Activated CD4-positive, alpha-beta memory T cell treated with anti-CD3 and anti-CD28 coated beads for 36 hours (primary cell): ENCODE measurements at regions of chr19 and their contacts with region 1.

Region 1: DNA sequence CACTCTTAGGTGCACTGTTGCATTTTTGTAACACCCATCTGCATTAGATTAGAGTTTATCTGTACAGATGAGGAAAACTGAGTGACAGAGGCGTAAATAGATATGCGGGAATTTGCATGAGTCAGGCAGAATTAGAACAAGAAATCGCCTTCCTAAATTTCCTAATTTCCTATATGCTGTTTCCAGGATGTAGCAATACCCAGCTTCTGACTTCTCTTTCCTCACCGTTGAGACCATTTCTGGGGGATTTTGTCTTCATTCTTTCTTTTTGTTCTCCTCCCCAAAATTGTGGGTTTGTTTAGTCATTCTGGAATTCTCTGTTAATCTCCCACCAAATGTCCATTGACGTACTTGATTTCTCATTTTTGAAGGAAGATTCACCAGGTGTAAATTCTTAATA is 10.6 kb upstream of the ZNF792 start:
- DNase-seq: no peak
- H3K4me3 Mint-ChIP-seq: no peak overlapping the region
- H3K27ac Mint-ChIP-seq: no peak overlapping the region
- H3K4me1 Mint-ChIP-seq: peaks cover 27% of the 10 kb centered on the region
- H3K27me3 Mint-ChIP-seq: no peaks in the 10 kb centered on the region

Region 2: GRCh38 chr19:34990578-34991192 is 16.0 kb after region 1 on chr19:
- CTCF ChIA-PET with region 1: interaction called, 10 read pairs
- POLR2A ChIA-PET with region 1: interaction called, 3 read pairs
- intact Hi-C with region 1: loop called (anchors 2 kb)
- DNase-seq: peak; percentile 85
- H3K4me3 Mint-ChIP-seq: peak overlapping the region; percentile 33
- H3K27ac Mint-ChIP-seq: peak overlapping the region; percentile 96
- H3K4me1 Mint-ChIP-seq: peaks cover 59% of the 10 kb centered on the region
- H3K27me3 Mint-ChIP-seq: no peaks in the 10 kb centered on the region

Region 3: DNA sequence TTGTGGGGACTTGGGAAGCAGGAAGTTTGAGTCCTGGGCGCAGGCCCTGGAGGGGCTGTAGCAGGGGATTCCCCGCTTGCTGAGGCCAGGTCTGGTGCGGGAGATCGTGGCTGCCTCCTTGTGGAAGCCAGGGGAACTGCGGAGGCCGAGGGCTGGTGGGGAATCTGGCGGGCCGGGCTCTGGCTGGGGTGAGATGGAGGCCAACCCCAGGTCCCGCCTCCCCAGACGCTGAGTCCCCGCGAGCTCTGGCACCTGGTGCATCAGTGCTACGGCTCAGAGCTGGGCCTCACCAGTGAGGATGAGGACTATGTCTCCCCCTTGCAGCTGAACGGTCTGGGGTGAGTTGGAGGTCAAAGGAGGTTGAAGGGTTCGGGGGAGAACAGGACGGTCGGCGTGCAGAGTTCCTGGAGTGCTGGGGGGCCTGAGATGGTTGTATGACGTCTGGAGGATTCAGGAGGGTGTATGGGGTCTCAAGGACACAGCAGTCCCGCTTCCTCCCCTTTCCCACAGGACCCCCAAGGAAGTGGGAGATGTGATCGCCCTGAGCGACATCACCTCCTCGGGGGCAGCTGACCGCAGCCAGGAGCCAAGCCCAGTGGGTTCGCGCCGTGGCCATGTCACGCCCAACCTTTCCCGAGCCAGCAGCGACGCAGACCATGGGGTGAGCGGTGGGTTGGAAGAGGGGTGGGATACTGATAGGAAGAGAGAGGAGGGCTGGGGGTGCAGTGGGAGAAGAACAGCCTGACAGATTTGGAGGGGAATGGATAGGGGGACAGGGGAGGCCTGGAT is 38.6 kb after region 1 on chr19:
- CTCF ChIA-PET with region 1: interaction called, 175 read pairs
- POLR2A ChIA-PET with region 1: interaction called, 11 read pairs
- intact Hi-C with region 1: loop called (anchors 1 kb)
- DNase-seq: peak; percentile 88
- H3K4me3 Mint-ChIP-seq: peak overlapping the region; percentile 43
- H3K27ac Mint-ChIP-seq: peak overlapping the region; percentile 87
- H3K4me1 Mint-ChIP-seq: peaks cover 59% of the 10 kb centered on the region
- H3K27me3 Mint-ChIP-seq: no peaks in the 10 kb centered on the region